ENCODE measurements at regions of chr11 and their contacts with region 1.

Region 1: DNA sequence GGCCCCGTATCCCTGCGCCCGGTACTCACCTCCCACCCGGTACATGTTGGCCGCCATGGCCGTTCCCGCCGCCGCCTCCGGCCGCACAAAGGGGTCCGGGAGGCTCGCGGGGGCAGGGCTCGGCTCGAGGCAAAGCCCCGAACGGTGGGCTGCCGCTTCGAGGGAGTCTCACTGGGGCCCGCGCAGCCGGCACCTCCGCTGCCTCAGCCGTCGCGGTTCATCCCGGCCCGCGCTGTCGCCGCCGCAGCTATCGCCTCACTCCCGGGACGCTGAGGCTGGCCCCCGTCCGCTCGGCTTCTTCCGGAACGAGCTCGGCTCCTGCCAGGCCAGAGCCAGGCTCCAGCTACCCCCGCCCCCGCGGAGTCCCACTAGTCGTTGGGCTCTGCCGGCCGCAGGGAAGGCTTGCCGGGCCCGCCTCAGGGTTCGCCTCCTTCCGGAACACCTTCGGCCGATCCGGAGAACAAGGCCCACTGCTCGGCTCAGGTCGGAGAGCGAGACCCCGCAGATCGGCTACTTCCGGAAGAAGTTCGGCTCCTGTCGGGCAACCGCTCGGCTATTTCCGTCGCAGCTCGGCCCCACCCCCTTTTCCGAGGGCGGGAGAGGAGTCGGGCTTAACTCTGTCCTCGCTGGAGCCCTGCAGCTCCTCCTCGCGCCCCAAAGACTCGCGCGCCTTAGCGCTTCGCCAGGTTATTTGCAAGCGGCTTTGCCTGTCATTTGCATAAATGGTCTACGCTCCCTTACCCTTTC is at the start of gene MTA2:
- DNase-seq: peak; percentile 97
- H3K4me3 ChIP-seq: peak within 1 kb of the TSS; percentile 70 to 96
- H3K27ac ChIP-seq: peak within 1 kb of the TSS; percentile 87 to 93
- H3K4me1 ChIP-seq: peaks cover 12 to 23% of the 10 kb centered on the region in 2 experiments; a peak in 3 of 4 replicates
- H3K27me3 ChIP-seq: no peaks in the 10 kb centered on the region
- CTCF ChIP-seq: no peak
- EP300 ChIP-seq: no peak
- RAD21 ChIP-seq: no peak
- polyA plus RNA-seq, gene MTA2: 18.4 and 20.6 TPM in 2 replicates

Region 2: DNA sequence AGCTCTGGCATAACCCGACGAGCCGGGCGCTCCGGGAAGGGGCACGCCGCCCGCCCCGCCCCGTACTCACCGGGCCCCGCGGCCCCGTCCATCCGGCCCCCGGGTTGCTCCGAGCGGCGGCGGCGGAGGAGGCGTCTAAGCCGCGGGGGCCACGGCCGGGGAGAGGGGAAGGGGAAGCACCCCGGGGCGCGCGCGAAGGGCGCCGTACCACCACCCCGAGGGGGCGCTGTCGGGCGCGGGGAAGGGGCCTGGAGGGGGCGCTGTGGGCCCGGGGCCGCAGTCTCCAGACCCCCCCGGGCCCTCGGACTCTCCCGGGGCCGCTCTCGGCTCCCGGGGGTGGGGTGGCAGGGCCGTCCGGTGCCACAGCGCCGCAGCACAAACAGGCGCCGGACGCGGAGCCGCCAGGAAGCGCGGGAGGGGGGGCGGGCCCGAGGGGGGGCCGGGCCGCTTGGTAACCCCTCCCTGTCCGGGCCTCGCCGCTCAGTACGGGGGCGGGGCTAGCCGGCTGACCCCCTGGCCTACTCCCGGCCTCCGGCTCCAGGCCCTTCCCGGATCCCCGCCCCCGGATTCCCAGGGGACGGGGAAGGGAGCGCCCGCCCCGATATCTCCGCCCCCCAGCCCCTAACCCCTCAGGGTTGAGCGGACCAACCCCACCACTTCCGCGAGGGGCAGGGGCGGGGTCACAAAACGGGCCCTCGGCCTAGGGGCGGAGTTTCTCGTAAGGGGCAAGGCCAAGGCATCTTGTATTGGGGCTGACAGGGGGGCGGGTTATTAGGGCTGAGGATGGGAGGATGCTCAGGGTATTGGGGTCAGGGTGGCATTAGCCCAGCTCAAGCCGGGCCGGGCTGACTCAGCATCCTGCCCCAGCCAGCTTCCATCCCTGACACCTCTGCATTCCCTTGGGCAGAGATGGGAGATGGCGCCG is 11.1 kb after region 1 on chr11 and contains the starts of genes EML3 and ROM1:
- CTCF ChIA-PET with region 1: interaction called, 23 read pairs
- POLR2A ChIA-PET with region 1: interaction called, 17 read pairs
- DNase-seq: peak; percentile 97
- H3K4me3 ChIP-seq: peak within 1 kb of the TSS; percentile 71 to 81
- H3K27ac ChIP-seq: peak within 1 kb of the TSS; percentile 70 to 92
- H3K4me1 ChIP-seq: peaks cover 4 to 24% of the 10 kb centered on the region in 2 experiments; a peak in 2 of 4 replicates
- H3K27me3 ChIP-seq: no peaks in the 10 kb centered on the region
- CTCF ChIP-seq: peak; percentile 76
- EP300 ChIP-seq: no peak
- RAD21 ChIP-seq: no peak; the same call in 1 of the 2 replicates
- polyA plus RNA-seq, gene EML3: 43.0 and 47.8 TPM in 2 replicates
- polyA plus RNA-seq, gene ROM1: 7.3 and 7.9 TPM in 2 replicates

Measured in SK-N-SH (cell line).